OCI-LY7 (cell line): ENCODE measurements at regions of chr2 and their contacts with region 1.

Region 1: DNA sequence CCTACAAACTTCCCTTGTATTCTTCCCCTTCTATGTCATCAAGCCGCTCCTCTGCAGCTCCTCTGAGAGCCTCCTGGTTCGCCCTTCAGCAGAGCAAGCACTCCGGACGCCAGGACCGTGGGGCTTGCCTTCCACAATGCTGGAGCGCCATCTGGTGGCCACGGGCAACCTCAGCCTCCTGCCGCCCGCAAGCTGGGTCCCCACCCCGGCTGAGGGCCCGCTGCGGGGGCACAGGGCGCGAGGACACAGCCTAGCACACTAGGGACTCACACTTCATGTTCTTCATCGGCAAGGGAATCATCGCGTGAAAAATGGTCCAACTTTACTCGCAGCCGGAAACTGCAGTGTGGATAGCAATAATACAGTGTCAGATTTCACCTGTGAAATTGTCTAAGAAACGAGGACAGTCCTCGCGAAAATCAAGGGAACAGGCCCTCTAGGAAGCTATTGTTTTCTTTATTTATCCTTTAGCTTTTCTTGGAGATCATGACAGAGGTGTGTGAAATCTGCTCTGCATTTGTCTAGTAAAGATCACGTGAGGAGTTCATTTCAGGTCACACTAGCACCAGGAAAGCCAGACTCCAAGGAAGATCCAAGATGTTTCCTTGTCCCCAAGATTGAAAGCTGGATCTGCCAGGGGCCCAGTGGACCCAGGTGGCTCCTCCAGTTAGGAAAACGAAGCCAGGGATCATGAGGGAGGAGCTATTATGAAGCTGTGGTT is 5.8 kb downstream of the PRLH start:
- DNase-seq: peak; percentile 91
- H3K4me3 ChIP-seq: no peak overlapping the region
- H3K27ac ChIP-seq: no peak overlapping the region
- H3K4me1 ChIP-seq: no peaks in the 10 kb centered on the region
- CTCF ChIP-seq: peak; percentile 99

Region 2: GRCh38 chr2:237122214-237122666 is 449.9 kb before region 1 on chr2:
- CTCF ChIA-PET with region 1: no interaction called
- POLR2A ChIA-PET with region 1: no interaction called
- intact Hi-C with region 1: loop called (anchors 10 kb)
- DNase-seq: peak; percentile 47
- H3K4me3 ChIP-seq: no peak overlapping the region
- H3K27ac ChIP-seq: no peak overlapping the region
- H3K4me1 ChIP-seq: peaks cover 5% of the 10 kb centered on the region
- CTCF ChIP-seq: peak; percentile 67

Region 3: GRCh38 chr2:237474931-237475703 is 97.1 kb before region 1 on chr2:
- CTCF ChIA-PET with region 1: interaction called, 7 read pairs
- POLR2A ChIA-PET with region 1: no interaction called
- intact Hi-C with region 1: loop called (anchors 1 kb)
- DNase-seq: peak; percentile 81
- H3K4me3 ChIP-seq: peak overlapping the region; percentile 93
- H3K27ac ChIP-seq: no peak overlapping the region
- H3K4me1 ChIP-seq: peaks cover 10% of the 10 kb centered on the region
- CTCF ChIP-seq: peak; percentile 86

Region 4: DNA sequence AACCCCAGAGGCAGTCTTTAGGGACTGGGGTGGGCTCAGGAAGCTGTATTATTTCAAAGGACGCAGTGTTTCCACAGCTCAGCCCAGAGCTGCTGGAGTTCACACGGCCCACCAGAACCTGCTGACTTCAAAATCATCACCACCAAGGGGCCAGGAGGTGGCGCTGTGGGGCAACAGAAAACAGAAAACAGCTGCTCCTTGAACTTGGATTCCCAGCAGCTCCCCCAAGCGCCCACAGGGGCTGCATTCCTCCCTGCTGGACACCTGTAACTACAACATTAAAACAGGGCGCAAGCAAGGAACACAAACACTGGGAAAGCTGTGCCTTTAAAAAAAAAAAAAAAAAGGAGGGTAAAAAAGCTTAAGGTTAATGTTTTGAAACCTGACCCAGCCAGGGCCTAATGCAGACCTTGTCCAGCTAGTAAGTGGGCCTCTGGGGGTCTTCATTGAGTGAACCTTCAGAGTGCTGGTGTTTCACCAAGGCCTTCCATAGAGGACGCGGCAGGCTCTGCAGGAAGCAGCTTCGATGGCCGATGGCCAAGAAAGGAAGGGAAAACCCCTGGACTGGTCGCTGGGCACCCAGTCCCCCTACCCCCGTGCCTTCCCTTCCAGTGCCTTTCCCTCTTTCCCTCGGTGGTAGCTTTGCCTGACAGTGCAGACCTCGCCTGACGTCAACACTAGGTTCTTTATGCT is 59.3 kb before region 1 on chr2:
- CTCF ChIA-PET with region 1: interaction called, 36 read pairs
- POLR2A ChIA-PET with region 1: interaction called, 3 read pairs
- intact Hi-C with region 1: loop called (anchors 1 kb)
- DNase-seq: peak; percentile 85
- H3K4me3 ChIP-seq: no peak overlapping the region
- H3K27ac ChIP-seq: no peak overlapping the region
- H3K4me1 ChIP-seq: peaks cover 33% of the 10 kb centered on the region
- CTCF ChIP-seq: peak; percentile 97

Region 5: GRCh38 chr2:237650455-237650850 is 78.3 kb after region 1 on chr2:
- CTCF ChIA-PET with region 1: no interaction called
- POLR2A ChIA-PET with region 1: no interaction called
- intact Hi-C with region 1: no loop called
- DNase-seq: no peak
- H3K4me3 ChIP-seq: no peak overlapping the region
- H3K27ac ChIP-seq: no peak overlapping the region
- H3K4me1 ChIP-seq: peaks cover 20% of the 10 kb centered on the region
- CTCF ChIP-seq: no peak